Activated CD4-positive, alpha-beta memory T cell treated with anti-CD3 and anti-CD28 coated beads, Interleukin-2, amount 10 ng/mL, durations not matched to agents 7 days and 5 days (primary cell): ENCODE measurements at regions of chr5 and their contacts with region 1.

Region 1: DNA sequence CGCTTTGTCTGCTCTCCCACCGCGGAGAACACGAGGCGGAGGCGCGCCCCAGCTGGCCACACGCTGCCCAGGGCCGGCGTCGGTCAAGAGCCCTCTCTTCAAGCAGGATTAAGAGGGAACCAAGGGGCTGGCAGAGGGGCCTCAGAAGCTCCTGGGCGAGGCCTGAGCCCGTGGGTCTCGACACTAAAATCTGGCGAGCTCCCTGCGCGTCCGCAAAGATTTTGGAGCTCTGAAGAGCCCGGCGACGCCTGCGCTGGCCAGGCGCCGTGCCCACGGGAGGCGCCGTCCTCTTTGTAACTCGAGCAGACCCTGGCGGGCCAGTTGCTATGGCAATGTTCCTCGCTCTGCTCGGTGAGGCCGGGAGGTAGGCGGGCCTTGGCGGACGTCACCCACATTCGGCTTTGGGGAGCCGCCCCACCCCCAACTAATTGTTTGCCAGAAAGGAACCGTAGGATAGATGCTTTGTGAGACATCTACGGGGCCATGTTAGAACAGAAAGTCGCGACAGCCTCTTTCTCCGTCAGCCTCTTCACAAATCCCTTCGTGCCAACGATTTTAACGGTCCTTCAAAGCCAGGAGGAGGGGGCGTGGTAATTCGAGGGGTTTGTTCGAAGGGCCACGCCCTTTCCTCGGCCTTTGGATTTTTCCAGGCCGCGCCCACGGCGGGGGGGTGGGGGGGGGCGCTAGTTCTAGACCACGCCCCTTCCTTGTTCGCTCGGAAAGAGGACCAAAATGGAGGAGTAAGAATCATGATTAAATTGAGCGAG is 714 bp upstream of the CNOT8 start:
- DNase-seq: peak; percentile 86
- H3K4me3 Mint-ChIP-seq: peak overlapping the region; percentile 89
- H3K27ac Mint-ChIP-seq: peak overlapping the region; percentile 100
- H3K4me1 Mint-ChIP-seq: peaks cover 36% of the 10 kb centered on the region
- H3K27me3 Mint-ChIP-seq: no peaks in the 10 kb centered on the region

Region 2: DNA sequence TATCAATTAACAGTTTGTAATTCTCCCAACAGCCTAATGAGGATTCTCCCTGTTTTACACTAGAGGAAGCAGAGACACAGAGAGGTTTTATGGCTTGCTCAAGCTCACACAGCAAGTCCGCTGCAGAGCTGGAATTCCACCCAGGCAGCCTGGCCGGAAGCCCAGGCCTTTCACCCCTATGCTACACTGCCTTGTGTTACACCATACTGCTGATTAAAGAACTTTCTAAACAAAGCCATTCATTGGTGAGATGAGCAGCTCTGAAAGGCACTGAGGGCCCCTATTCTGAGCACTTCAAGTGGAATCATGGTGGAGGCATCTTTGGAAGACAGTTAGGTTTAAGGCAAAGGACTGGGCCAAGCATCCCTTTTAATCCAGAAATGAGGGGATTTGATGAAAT is 117.2 kb before region 1 on chr5:
- CTCF ChIA-PET with region 1: no interaction called
- POLR2A ChIA-PET with region 1: no interaction called
- DNase-seq: no peak
- H3K4me3 Mint-ChIP-seq: no peak overlapping the region
- H3K27ac Mint-ChIP-seq: no peak overlapping the region
- H3K4me1 Mint-ChIP-seq: no peaks in the 10 kb centered on the region
- H3K27me3 Mint-ChIP-seq: no peaks in the 10 kb centered on the region

Region 3: GRCh38 chr5:154756811-154757675 is 100.7 kb before region 1 on chr5:
- CTCF ChIA-PET with region 1: no interaction called
- POLR2A ChIA-PET with region 1: interaction called, 27 read pairs
- DNase-seq: peak; percentile 49
- H3K4me3 Mint-ChIP-seq: peak overlapping the region; percentile 90
- H3K27ac Mint-ChIP-seq: peak overlapping the region; percentile 88
- H3K4me1 Mint-ChIP-seq: peaks cover 58% of the 10 kb centered on the region
- H3K27me3 Mint-ChIP-seq: no peaks in the 10 kb centered on the region

Region 4: DNA sequence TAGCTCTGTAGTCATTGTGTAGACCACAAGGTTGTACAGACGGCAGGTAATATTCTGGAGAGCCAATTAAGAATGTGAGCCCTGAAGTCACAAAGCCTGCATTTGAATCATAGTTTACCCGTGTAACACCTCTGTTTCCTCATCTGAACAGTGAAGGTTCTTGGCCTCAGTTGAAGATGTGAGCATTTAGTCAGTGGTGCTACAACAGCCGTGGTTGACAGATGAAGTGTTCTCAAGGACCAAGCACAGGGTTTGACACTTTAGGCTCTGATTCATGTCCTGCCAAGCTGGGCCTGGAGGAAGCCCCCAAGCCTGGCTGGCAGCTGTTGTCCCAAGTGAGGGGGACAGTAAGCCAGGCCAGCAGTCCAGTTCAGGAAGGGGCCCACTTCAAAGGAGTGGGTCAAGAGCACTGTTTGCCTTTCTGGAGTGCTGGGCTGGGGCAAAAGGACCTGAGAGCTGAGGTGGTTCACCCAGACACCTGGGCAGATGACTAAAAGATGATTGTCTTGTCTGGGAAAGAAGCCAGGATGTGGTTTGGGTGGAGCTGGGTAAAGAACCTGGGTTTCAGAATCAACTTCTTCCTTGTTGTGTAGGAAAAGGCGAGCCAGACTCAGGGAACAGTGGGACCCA is 28.0 kb before region 1 on chr5:
- CTCF ChIA-PET with region 1: interaction called, 3 read pairs
- POLR2A ChIA-PET with region 1: interaction called, 28 read pairs
- DNase-seq: peak; percentile 52
- H3K4me3 Mint-ChIP-seq: no peak overlapping the region
- H3K27ac Mint-ChIP-seq: peak overlapping the region; percentile 88
- H3K4me1 Mint-ChIP-seq: peaks cover 48% of the 10 kb centered on the region
- H3K27me3 Mint-ChIP-seq: no peaks in the 10 kb centered on the region

Region 5: DNA sequence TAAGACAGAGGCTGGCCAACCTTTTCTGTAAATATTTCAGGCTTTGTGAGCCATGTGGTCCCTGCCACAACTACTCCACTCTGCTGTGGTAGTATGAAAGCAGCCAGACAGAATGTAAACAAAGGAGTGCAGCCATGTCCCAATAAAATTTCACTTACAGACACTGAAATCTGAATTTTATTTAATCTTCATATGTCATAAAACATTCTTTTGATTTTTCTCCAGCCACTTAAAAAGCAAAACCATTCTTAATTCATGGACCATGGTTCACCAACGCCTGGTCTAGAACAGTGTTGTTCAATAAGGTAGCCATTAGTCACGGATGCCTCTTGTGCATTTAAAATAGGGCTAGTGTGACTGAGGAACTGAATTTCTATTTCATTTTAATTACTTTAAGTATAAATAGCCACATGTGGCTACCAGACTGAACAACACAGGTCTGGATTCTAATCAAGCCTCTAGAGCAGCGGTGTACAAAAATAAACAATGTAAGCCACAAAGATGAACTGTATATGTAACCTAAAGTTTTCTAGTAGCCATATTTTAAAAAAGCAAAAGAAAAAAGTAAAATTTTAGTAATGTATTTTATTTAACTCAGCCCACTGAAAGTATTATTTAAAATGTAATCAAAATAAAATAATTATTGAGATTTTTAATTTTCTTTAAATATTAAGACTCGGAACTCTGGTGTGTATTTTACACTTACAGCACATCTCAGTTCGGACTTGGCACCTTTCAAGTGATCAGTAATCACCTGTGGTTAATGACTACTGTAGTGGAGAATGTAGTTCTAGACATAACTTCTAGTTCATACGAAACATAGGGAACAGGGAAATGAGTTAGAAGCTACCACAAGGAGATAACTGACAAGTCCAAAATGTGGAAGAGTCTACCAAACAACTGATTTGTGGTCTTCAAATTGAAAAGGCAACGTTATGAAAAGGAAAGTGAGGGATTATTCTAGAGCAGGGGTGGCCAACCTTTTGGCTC is 66.0 kb after region 1 on chr5:
- CTCF ChIA-PET with region 1: no interaction called
- POLR2A ChIA-PET with region 1: no interaction called
- DNase-seq: no peak
- H3K4me3 Mint-ChIP-seq: no peak overlapping the region
- H3K27ac Mint-ChIP-seq: no peak overlapping the region
- H3K4me1 Mint-ChIP-seq: no peaks in the 10 kb centered on the region
- H3K27me3 Mint-ChIP-seq: no peaks in the 10 kb centered on the region

Region 6: GRCh38 chr5:154940772-154941620 is 83.3 kb after region 1 on chr5 and contains the start of gene MRPL22:
- CTCF ChIA-PET with region 1: no interaction called
- POLR2A ChIA-PET with region 1: interaction called, 24 read pairs
- DNase-seq: peak; percentile 95
- H3K4me3 Mint-ChIP-seq: peak within 1 kb of the TSS; percentile 93
- H3K27ac Mint-ChIP-seq: peak within 1 kb of the TSS; percentile 90
- H3K4me1 Mint-ChIP-seq: peaks cover 52% of the 10 kb centered on the region
- H3K27me3 Mint-ChIP-seq: no peaks in the 10 kb centered on the region
- total RNA-seq, gene MRPL22: 60.0 to 62.2 TPM